CD4-positive, alpha-beta memory T cell (primary cell): ENCODE measurements at regions of chr1 and their contacts with region 1.

Region 1: DNA sequence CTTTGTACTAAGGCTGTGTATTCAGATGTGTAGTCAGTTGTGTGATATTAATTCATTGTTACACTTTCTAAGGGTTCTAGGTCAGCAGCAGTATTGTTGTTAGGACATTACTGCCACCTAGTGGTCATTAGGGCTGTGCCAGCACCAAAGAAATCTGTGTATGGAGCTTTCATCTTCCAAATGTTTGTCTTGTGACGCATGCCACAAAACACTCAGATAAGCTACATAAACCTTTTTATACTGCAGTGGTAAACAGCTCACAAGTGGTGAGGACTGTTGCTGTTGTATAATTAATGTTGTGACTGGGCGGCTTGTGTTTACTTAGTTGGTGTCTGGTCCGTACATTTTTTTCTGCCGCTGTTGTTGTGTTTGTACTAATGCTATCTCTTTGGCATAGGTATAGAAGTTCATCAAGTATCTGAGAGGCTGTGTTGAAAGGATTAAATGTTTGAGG is 51.7 kb downstream of the S1PR1 start:
- DNase-seq: peak; percentile 77 to 82 (median 80)
- H3K4me3 ChIP-seq: no peak overlapping the region
- H3K4me3 Mint-ChIP-seq: peak overlapping the region in 7 of 8 donors; percentile 12 to 78 (median 18)
- H3K27ac ChIP-seq: no peak overlapping the region
- H3K27ac Mint-ChIP-seq: peak overlapping the region; percentile 76 to 87 (median 86)
- H3K4me1 ChIP-seq: peaks cover 89% of the 10 kb centered on the region
- H3K4me1 Mint-ChIP-seq: peaks cover 58 to 90% (median 71%) of the 10 kb centered on the region in 4 donors
- H3K27me3 ChIP-seq: no peaks in the 10 kb centered on the region
- H3K27me3 Mint-ChIP-seq: no peaks in the 10 kb centered on the region

Region 2: DNA sequence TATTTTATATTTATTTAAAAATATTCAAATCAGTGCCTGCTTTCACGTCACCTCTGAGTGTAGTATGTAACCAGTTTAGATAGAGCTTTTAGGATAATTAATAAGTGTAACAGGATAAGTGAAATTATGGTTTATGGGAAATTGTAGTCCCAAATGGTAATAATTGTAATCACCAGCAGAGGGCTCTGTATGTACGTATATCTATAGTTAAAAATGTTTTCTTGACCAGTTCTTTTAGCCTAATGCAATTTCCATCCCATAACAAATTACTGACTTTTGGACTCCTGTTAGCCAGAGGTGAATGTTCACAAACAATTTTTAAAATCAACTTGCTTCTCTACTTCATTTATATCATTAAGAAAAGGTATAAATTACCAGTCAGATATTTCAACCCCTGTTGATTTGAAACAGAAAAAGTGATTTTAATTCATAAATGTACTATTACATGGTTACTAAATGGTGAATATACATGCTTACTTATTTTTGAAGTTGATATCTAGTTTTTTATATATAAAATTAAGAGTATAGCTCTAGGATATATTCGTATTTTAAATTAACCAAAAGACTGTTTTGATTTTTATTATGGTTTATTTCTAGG is 367.3 kb before region 1 on chr1:
- CTCF ChIA-PET with region 1: interaction called, 133 read pairs
- POLR2A ChIA-PET with region 1: interaction called, 18 read pairs
- intact Hi-C with region 1: loop called (anchors 1 kb)
- DNase-seq: peak in 4 of 5 donors; percentile 48 to 66 (median 60)
- H3K4me3 ChIP-seq: no peak overlapping the region
- H3K4me3 Mint-ChIP-seq: peak overlapping the region in 3 of 8 donors; percentile 24 to 67 (median 39)
- H3K27ac ChIP-seq: no peak overlapping the region
- H3K27ac Mint-ChIP-seq: peak overlapping the region; percentile 61 to 91 (median 82)
- H3K4me1 ChIP-seq: peaks cover 39% of the 10 kb centered on the region
- H3K4me1 Mint-ChIP-seq: peaks cover 25 to 61% (median 38%) of the 10 kb centered on the region in 4 donors
- H3K27me3 ChIP-seq: no peaks in the 10 kb centered on the region
- H3K27me3 Mint-ChIP-seq: no peaks in the 10 kb centered on the region

Region 3: GRCh38 chr1:101025657-101026504 is 262.6 kb before region 1 on chr1 and contains the start of gene DPH5:
- CTCF ChIA-PET with region 1: interaction called, 8 read pairs
- POLR2A ChIA-PET with region 1: interaction called, 3 read pairs
- intact Hi-C with region 1: loop called (anchors 2 kb)
- DNase-seq: peak; percentile 86 to 91 (median 87)
- H3K4me3 ChIP-seq: peak within 1 kb of the TSS; percentile 78 to 88
- H3K4me3 Mint-ChIP-seq: peak within 1 kb of the TSS; percentile 85 to 99 (median 96)
- H3K27ac ChIP-seq: peak within 1 kb of the TSS; percentile 76
- H3K27ac Mint-ChIP-seq: peak within 1 kb of the TSS; percentile 96 to 99 (median 98)
- H3K4me1 ChIP-seq: peaks cover 62% of the 10 kb centered on the region
- H3K4me1 Mint-ChIP-seq: peaks cover 46 to 81% (median 61%) of the 10 kb centered on the region in 4 donors
- H3K27me3 ChIP-seq: no peaks in the 10 kb centered on the region
- H3K27me3 Mint-ChIP-seq: no peaks in the 10 kb centered on the region
- total RNA-seq, gene DPH5: 49.3 to 58.3 TPM

Region 4: GRCh38 chr1:101136739-101137138 is 151.8 kb before region 1 on chr1:
- CTCF ChIA-PET with region 1: interaction called, 130 read pairs
- POLR2A ChIA-PET with region 1: interaction called, 12 read pairs
- intact Hi-C with region 1: loop called (anchors 1 kb)
- DNase-seq: peak in 3 of 5 donors; percentile 26 to 40 (median 32)
- H3K4me3 ChIP-seq: no peak overlapping the region
- H3K4me3 Mint-ChIP-seq: peak overlapping the region in 5 of 8 donors; percentile 26 to 67 (median 37)
- H3K27ac ChIP-seq: no peak overlapping the region
- H3K27ac Mint-ChIP-seq: peak overlapping the region; percentile 42 to 92 (median 77)
- H3K4me1 ChIP-seq: peaks cover 36% of the 10 kb centered on the region
- H3K4me1 Mint-ChIP-seq: peaks cover 32 to 57% (median 41%) of the 10 kb centered on the region in 4 donors
- H3K27me3 ChIP-seq: no peaks in the 10 kb centered on the region
- H3K27me3 Mint-ChIP-seq: no peaks in the 10 kb centered on the region

Region 5: DNA sequence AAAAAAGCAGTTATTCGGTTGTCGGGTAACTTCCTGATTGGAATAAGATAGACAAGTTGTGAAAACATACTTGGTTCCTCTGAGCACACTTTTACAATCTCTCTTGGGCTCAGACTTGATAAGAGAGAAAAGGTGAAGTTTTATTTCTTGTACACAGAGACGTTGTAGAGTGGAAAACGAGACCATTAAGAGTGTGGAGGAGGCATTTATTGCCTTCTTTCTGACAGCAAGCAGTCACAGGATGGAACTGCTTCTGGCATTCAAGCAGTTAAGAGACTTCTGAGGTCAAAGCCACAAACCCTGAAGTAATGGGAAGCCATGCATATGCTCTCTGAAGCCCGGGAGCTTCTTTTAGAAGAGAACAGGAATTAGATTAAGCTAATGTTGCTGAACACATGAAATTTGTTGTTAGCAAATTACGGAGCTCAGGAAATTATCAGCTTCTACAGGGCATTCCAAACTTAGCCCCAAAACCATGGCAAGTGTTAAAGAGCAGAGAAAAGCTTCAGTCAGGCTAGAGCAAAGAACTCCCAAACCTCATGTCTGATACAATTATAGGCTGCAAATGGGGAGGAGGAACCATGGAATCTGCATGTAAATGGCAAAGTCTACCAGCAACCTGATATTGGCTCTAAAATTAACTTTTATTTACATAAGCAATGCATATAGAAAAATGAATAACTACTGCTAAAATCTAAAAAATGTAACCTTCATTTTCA is 25.7 kb before region 1 on chr1:
- CTCF ChIA-PET with region 1: interaction called, 112 read pairs
- POLR2A ChIA-PET with region 1: interaction called, 74 read pairs
- intact Hi-C with region 1: loop called (anchors 1 kb)
- DNase-seq: peak; percentile 52 to 65 (median 57)
- H3K4me3 ChIP-seq: peak overlapping the region in 1 of 2 donors; percentile 23
- H3K4me3 Mint-ChIP-seq: peak overlapping the region; percentile 76 to 88 (median 80)
- H3K27ac ChIP-seq: peak overlapping the region; percentile 41
- H3K27ac Mint-ChIP-seq: peak overlapping the region; percentile 62 to 93 (median 92)
- H3K4me1 ChIP-seq: peaks cover 99% of the 10 kb centered on the region
- H3K4me1 Mint-ChIP-seq: peaks cover 73 to 91% (median 81%) of the 10 kb centered on the region in 4 donors
- H3K27me3 ChIP-seq: no peaks in the 10 kb centered on the region
- H3K27me3 Mint-ChIP-seq: no peaks in the 10 kb centered on the region

Region 6: DNA sequence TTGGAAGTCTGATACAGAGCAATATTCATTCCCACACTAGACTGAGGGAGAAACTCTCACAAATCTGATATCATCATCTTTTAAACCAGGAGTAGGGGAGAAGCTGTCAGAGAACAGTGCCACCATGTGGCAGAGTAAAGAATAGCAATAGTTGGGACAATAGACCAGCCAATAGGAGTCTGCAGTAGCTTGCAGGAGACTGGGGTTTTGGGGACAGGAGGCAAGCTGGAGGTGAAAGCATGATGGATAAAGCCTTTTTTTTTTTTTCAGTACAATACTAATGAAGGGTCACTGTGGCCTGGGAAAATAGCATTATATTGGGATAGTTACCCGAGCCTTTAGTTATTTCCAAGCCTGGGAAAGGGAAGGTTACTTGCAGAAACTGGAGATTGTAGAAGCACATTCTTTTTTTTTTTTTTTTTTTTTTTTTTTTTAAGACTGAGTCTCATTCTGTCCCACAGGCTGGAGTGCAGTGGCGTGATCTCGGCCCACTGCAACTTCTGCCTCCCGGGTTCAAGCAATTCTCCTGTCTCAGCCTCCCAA is 69.0 kb after region 1 on chr1:
- CTCF ChIA-PET with region 1: interaction called, 40 read pairs
- POLR2A ChIA-PET with region 1: interaction called, 7 read pairs
- intact Hi-C with region 1: loop called (anchors 1 kb)
- DNase-seq: peak; percentile 78 to 87 (median 83)
- H3K4me3 ChIP-seq: no peak overlapping the region
- H3K4me3 Mint-ChIP-seq: peak overlapping the region in 4 of 8 donors; percentile 4 to 65 (median 55)
- H3K27ac ChIP-seq: no peak overlapping the region
- H3K27ac Mint-ChIP-seq: peak overlapping the region in 5 of 7 donors; percentile 67 to 96 (median 88)
- H3K4me1 ChIP-seq: peaks cover 13% of the 10 kb centered on the region
- H3K4me1 Mint-ChIP-seq: peaks cover 7 to 10% (median 10%) of the 10 kb centered on the region in 4 donors
- H3K27me3 ChIP-seq: no peaks in the 10 kb centered on the region
- H3K27me3 Mint-ChIP-seq: no peaks in the 10 kb centered on the region